ENCODE measurements at regions of chr12 and their contacts with region 1.

Region 1: DNA sequence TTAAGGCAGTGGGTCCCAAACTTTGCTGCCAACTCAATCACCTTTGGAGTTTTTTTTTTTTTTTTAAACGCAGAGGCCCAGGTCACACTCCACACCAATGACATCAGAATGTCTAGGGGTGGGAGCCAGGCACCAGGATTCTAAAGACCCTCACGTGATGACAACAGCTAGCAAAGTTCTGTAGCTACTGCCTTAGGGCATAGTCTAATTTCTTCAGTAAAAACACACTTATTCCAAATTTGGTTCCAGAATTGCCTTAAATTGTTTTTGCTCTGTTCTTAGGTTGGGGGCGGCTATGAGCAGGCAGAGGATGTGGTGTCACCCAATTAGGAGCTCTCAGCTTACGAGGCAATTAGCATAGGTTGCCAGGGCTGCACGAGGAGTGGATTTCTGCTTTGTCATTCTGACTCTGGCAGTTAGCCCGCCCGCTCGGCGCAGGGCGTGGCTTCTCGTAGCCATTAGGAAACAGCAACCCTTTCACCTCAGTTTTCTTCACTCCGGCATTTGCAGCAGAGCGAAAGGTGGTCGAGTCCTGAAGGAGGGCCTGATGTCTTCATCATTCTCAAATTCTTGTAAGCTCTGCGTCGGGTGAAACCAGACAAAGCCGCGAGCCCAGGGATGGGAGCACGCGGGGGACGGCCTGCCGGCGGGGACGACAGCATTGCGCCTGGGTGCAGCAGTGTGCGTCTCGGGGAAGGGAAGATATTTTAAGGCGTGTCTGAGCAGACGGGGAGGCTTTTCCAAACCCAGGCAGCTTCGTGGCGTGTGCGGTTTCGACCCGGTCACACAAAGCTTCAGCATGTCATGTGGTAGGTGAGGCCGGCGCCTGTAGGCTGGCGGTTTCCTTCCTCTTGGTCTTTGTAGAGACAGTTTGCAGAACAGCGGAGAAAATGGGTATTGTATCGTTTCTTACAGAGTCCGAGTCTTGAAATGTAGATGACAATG is 16.7 kb upstream of the EID3 start:
- DNase-seq: peak; percentile 94
- H3K4me3 Mint-ChIP-seq: peak overlapping the region; percentile 96
- H3K27ac Mint-ChIP-seq: peak overlapping the region; percentile 98
- H3K4me1 Mint-ChIP-seq: peaks cover 12% of the 10 kb centered on the region
- H3K27me3 Mint-ChIP-seq: no peaks in the 10 kb centered on the region

Region 2: GRCh38 chr12:103840876-103841689 is 445.7 kb before region 1 on chr12 and contains the start of gene NT5DC3:
- CTCF ChIA-PET with region 1: no interaction called
- intact Hi-C with region 1: loop called (anchors 1 kb)
- DNase-seq: peak; percentile 82
- H3K4me3 Mint-ChIP-seq: peak within 1 kb of the TSS; percentile 81
- H3K27ac Mint-ChIP-seq: no peak within 1 kb of the TSS
- H3K4me1 Mint-ChIP-seq: peaks cover 21% of the 10 kb centered on the region
- H3K27me3 Mint-ChIP-seq: no peaks in the 10 kb centered on the region
- total RNA-seq, gene NT5DC3: 6.0 to 6.4 TPM

Region 3: DNA sequence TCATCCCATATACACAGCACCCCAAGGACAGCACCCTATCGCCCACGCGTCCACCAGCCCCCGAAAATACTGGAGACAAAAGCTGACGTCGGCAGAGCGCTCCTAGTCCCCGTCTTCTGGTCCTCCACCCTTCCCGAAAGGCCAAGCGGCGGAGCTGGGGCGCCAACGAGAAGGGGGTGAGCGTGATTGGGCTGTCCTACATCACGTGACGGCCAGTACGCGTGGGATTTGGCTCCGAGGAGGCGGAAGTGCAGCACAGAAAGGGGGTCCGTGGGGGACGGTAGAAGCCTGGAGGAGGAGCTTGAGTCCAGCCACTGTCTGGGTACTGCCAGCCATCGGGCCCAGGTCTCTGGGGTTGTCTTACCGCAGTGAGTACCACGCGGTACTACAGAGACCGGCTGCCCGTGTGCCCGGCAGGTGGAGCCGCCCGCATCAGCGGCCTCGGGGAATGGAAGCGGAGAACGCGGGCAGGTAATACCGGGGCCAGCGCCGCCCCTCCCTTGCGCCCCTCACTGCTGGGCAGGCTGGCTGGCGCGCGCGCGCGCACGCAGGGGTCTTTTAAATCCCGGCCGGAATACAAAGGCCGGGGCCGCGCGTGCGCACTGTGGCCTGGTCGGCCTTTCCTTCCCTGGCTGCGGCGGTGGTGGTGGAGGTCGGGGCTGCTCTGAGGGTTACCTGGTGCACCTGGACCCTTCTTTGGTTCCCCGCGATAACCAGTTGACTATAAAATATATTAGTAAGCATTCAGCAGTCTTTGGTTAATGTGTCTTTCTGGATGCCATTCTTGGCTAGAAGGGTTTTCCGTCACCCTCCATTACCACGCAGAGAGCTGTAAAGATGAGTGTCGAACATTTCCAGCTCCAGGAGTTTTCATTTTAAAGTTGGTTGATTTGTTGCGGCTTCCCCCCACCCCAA is 321.0 kb before region 1 on chr12 and contains the start of gene TDG:
- CTCF ChIA-PET with region 1: no interaction called
- intact Hi-C with region 1: loop called (anchors 1 kb)
- DNase-seq: peak; percentile 99
- H3K4me3 Mint-ChIP-seq: peak within 1 kb of the TSS; percentile 96
- H3K27ac Mint-ChIP-seq: peak within 1 kb of the TSS; percentile 97
- H3K4me1 Mint-ChIP-seq: peaks cover 48% of the 10 kb centered on the region
- H3K27me3 Mint-ChIP-seq: no peaks in the 10 kb centered on the region
- total RNA-seq, gene TDG: 18.0 to 19.3 TPM

Region 4: DNA sequence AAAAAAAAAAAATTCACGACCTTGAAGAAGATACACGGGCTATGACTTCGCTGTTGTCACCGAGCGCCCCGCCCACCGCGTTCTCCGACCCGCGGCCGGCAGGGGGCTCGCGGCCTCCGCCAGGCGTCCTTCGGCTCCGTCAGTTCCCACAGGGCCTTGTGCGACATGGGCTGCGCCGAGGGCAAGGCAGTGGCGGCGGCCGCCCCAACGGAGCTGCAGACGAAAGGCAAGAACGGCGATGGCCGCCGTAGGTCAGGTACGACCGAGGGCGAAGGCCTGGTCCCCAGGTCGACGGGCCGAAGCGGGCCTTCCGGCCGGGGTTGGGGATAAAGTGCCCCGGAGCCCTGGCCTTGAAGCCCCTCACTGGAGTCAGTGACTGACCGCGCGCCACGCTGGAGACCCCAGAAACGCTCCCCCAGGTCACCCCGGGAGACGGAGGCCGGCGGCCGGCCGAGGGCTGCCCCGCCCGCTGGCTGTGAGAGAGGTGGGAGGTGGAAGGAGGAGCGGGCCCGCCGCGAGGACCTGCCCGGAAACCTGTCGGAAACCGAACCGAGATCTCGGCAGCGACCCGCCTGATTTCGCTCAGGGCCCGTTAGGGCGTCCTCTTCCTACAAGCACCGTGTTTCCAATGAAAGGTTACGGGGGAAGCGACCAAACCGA is 71.0 kb before region 1 on chr12 and contains the start of gene TXNRD1:
- CTCF ChIA-PET with region 1: interaction called, 21 read pairs
- intact Hi-C with region 1: loop called (anchors 1 kb)
- DNase-seq: peak; percentile 88
- H3K4me3 Mint-ChIP-seq: peak within 1 kb of the TSS; percentile 65
- H3K27ac Mint-ChIP-seq: no peak within 1 kb of the TSS
- H3K4me1 Mint-ChIP-seq: peaks cover 39% of the 10 kb centered on the region
- H3K27me3 Mint-ChIP-seq: no peaks in the 10 kb centered on the region
- total RNA-seq, gene TXNRD1: 86.0 to 86.9 TPM

Region 5: GRCh38 chr12:104456417-104456949 is 169.7 kb after region 1 on chr12 and contains the start of gene CHST11:
- CTCF ChIA-PET with region 1: no interaction called
- intact Hi-C with region 1: loop called (anchors 2 kb)
- DNase-seq: peak; percentile 86
- H3K4me3 Mint-ChIP-seq: peak within 1 kb of the TSS; percentile 97
- H3K27ac Mint-ChIP-seq: peak within 1 kb of the TSS; percentile 94
- H3K4me1 Mint-ChIP-seq: peaks cover 28% of the 10 kb centered on the region
- H3K27me3 Mint-ChIP-seq: peaks cover 2% of the 10 kb centered on the region
- total RNA-seq, gene CHST11: 39.3 to 45.3 TPM

Region 6: GRCh38 chr12:104958009-104958945 is 671.5 kb after region 1 on chr12 and contains the start of gene SLC41A2:
- CTCF ChIA-PET with region 1: no interaction called
- intact Hi-C with region 1: loop called (anchors 1 kb)
- DNase-seq: peak; percentile 85
- H3K4me3 Mint-ChIP-seq: peak within 1 kb of the TSS; percentile 84
- H3K27ac Mint-ChIP-seq: peak within 1 kb of the TSS; percentile 72
- H3K4me1 Mint-ChIP-seq: peaks cover 19% of the 10 kb centered on the region
- H3K27me3 Mint-ChIP-seq: peaks cover 14% of the 10 kb centered on the region
- total RNA-seq, gene SLC41A2: 2.7 to 3.5 TPM

Measured in activated naive CD4-positive, alpha-beta T cell treated with anti-CD3 and anti-CD28 coated beads for 36 hours (primary cell).